H1 (cell line): ENCODE measurements at regions of chr9 and their contacts with region 1.

Region 1: GRCh38 chr9:112074250-112075008 is 100.7 kb downstream of the SUSD1 start:
- DNase-seq: peak in 1 of 2 experiments; percentile 64
- H3K4me3 ChIP-seq: no peak overlapping the region
- H3K27ac ChIP-seq: no peak overlapping the region
- H3K4me1 ChIP-seq: peaks cover 0 to 2% (median under 1%) of the 10 kb centered on the region in 4 experiments; a peak in 1 of 7 replicates
- H3K27me3 ChIP-seq: no peaks in the 10 kb centered on the region
- CTCF ChIP-seq: peak in 2 of 3 experiments; percentile 73 to 89; a peak in 3 of 4 replicates
- EP300 ChIP-seq: no peak
- POLR2A ChIP-seq: no peak
- RAD21 ChIP-seq: peak; percentile 91 to 92

Region 2: GRCh38 chr9:111759762-111760639 is 314.4 kb before region 1 on chr9:
- CTCF ChIA-PET with region 1: interaction called, 118 read pairs
- POLR2A ChIA-PET with region 1: interaction called, 5 read pairs
- DNase-seq: no peak
- H3K4me3 ChIP-seq: no peak overlapping the region
- H3K27ac ChIP-seq: no peak overlapping the region
- H3K4me1 ChIP-seq: no peaks in the 10 kb centered on the region
- H3K27me3 ChIP-seq: no peaks in the 10 kb centered on the region
- CTCF ChIP-seq: peak in 2 of 3 experiments; percentile 54 to 58; a peak in 3 of 4 replicates
- EP300 ChIP-seq: no peak
- POLR2A ChIP-seq: no peak
- RAD21 ChIP-seq: peak; percentile 90 to 92

Region 3: GRCh38 chr9:111970827-111971226 is 103.6 kb before region 1 on chr9:
- CTCF ChIA-PET with region 1: interaction called, 11 read pairs
- POLR2A ChIA-PET with region 1: no interaction called
- DNase-seq: no peak
- H3K4me3 ChIP-seq: no peak overlapping the region
- H3K27ac ChIP-seq: no peak overlapping the region
- H3K4me1 ChIP-seq: no peaks in the 10 kb centered on the region
- H3K27me3 ChIP-seq: no peaks in the 10 kb centered on the region
- CTCF ChIP-seq: no peak
- EP300 ChIP-seq: no peak
- POLR2A ChIP-seq: no peak
- RAD21 ChIP-seq: no peak

Region 4: GRCh38 chr9:112061152-112061740 is 13.2 kb before region 1 on chr9:
- CTCF ChIA-PET with region 1: interaction called, 15 read pairs
- POLR2A ChIA-PET with region 1: no interaction called
- DNase-seq: no peak
- H3K4me3 ChIP-seq: no peak overlapping the region
- H3K27ac ChIP-seq: no peak overlapping the region
- H3K4me1 ChIP-seq: peaks cover under 1 to 6% (median 2%) of the 10 kb centered on the region in 4 experiments; a peak in 5 of 7 replicates
- H3K27me3 ChIP-seq: no peaks in the 10 kb centered on the region
- CTCF ChIP-seq: no peak
- EP300 ChIP-seq: no peak
- POLR2A ChIP-seq: no peak
- RAD21 ChIP-seq: no peak

Region 5: DNA sequence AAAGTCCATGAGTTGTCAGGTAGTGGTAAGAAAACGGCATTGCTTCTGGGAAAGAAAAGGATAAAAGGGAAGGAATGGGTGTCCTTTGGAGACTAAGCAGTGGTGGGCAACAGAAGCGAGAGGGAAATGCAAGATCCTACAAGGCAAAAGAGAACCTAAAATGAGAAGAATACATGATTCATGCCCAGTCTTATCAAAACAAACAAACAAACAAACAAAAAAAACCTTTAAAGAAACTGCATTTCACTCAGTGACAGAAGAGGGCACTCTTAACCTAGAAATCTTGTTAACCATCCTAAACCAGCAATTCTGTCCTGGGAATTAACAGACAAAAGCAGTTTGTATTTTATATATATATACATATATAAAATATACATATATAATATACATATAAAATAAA is 12.2 kb after region 1 on chr9:
- CTCF ChIA-PET with region 1: interaction called, 18 read pairs
- POLR2A ChIA-PET with region 1: no interaction called
- DNase-seq: no peak
- H3K4me3 ChIP-seq: no peak overlapping the region
- H3K27ac ChIP-seq: no peak overlapping the region
- H3K4me1 ChIP-seq: no peaks in the 10 kb centered on the region; a peak in 1 of 7 replicates
- H3K27me3 ChIP-seq: no peaks in the 10 kb centered on the region
- CTCF ChIP-seq: peak in 2 of 3 experiments; percentile 48 to 56; a peak in 2 of 4 replicates
- EP300 ChIP-seq: no peak
- POLR2A ChIP-seq: no peak
- RAD21 ChIP-seq: peak; percentile 75 to 77